ENCODE measurements at regions of chr2 and their contacts with region 1.

Region 1: GRCh38 chr2:62195421-62196277 is at the start of gene B3GNT2:
- DNase-seq: peak; percentile 79 to 92 (median 84)
- ATAC-seq: peak; percentile 75
- H3K4me3 ChIP-seq: peak within 1 kb of the TSS; percentile 93 to 99
- H3K4me3 Mint-ChIP-seq: peak within 1 kb of the TSS; percentile 91
- H3K27ac ChIP-seq: peak within 1 kb of the TSS; percentile 86 to 90
- H3K27ac Mint-ChIP-seq: peak within 1 kb of the TSS; percentile 91
- H3K4me1 ChIP-seq: peaks cover 40% of the 10 kb centered on the region
- H3K4me1 Mint-ChIP-seq: peaks cover 32% of the 10 kb centered on the region
- H3K27me3 ChIP-seq: no peaks in the 10 kb centered on the region
- H3K27me3 Mint-ChIP-seq: no peaks in the 10 kb centered on the region
- CTCF ChIP-seq: no peak
- total RNA-seq, gene B3GNT2: 74.1 to 77.9 TPM

Region 2: DNA sequence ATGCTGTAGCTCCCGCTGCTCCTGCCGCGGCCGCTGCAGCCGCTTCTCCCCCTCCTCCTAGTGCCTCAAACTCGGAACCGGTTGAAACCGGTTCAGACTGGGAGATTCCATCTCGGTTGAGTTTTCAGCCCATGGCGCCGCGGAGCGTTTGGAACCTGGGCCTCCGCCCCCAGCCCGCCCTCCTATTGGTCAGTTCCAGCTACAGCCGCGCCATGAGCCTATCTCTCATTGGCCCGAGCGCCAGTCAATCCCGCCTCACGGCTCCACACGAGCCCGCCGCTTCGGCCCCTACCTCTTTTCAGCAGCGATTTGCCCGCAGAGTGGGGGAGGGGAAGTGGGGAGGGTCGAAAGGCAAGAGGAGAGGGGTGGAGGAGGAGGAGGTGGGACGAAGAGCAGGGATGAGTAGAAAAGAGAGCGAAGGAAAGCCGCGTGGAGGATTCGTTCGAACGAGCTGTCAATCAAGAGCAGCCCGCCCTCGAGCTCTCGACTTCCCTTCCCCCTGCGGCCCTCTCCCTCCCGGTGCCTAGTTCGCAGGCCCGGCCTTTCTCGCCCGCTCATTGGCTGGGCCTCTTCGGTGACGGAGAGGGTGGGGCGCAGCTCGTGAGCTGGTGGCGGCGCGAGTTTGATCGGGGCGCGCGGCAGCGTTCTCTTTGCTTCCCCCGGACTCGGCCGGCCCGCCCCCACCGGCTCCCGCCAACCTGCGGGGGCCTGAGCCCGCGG is 657.3 kb before region 1 on chr2 and contains the start of gene XPO1:
- CTCF ChIA-PET with region 1: no interaction called
- POLR2A ChIA-PET with region 1: no interaction called
- intact Hi-C with region 1: loop called (anchors 5 kb)
- DNase-seq: peak; percentile 94 to 100 (median 99)
- ATAC-seq: peak; percentile 74
- H3K4me3 ChIP-seq: peak within 1 kb of the TSS; percentile 83 to 92
- H3K4me3 Mint-ChIP-seq: peak within 1 kb of the TSS; percentile 92
- H3K27ac ChIP-seq: peak within 1 kb of the TSS; percentile 100
- H3K27ac Mint-ChIP-seq: peak within 1 kb of the TSS; percentile 99
- H3K4me1 ChIP-seq: peaks cover 23% of the 10 kb centered on the region
- H3K4me1 Mint-ChIP-seq: peaks cover 38% of the 10 kb centered on the region
- H3K27me3 ChIP-seq: no peaks in the 10 kb centered on the region
- H3K27me3 Mint-ChIP-seq: no peaks in the 10 kb centered on the region
- CTCF ChIP-seq: no peak
- total RNA-seq, gene XPO1: 96.6 TPM

Region 3: DNA sequence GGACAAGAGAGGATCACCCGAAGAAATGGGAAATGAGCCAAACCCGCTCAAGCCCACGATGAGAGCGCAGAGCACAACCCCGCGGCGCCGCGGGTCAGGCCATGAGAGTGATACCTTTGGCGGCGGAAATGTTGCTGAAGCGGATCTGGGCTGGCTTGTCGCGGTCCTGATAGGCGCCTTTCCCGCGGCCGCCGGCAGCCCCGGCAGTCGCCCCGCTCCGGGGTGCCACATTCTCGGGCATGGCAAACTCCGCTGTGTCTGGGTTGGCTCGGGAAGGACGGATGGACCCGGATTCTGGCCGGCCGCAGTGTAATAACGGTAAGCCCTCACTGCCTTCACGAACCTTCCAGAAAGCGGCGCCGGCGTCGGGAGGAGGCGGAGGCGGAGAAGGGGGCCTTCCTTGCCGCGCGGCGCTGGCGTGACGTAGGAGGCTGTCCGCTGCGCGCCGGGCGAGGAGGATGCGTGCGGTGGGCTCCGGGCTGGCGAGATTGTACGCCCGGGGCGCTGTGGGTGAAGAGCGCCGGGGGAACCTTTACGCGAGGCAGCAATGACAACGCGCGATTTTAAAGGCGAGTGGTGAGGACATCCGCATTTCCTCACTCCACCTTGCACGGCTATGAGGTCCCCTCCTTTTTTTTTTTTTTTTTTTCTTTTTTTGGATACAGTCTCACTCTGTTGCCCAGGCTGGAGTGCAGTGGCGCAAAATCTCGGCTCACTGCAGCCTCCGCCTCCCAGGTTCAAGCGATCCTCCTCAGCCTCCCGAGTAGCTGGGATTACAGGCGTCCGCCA is 307.2 kb before region 1 on chr2 and contains the start of gene CCT4:
- CTCF ChIA-PET with region 1: no interaction called
- POLR2A ChIA-PET with region 1: no interaction called
- intact Hi-C with region 1: loop called in 1 of 2 experiments (anchors 2 kb)
- DNase-seq: peak; percentile 81 to 98 (median 92)
- ATAC-seq: peak; percentile 89
- H3K4me3 ChIP-seq: peak within 1 kb of the TSS; percentile 85 to 100
- H3K4me3 Mint-ChIP-seq: peak within 1 kb of the TSS; percentile 95
- H3K27ac ChIP-seq: peak within 1 kb of the TSS; percentile 99
- H3K27ac Mint-ChIP-seq: peak within 1 kb of the TSS; percentile 98
- H3K4me1 ChIP-seq: peaks cover 28% of the 10 kb centered on the region
- H3K4me1 Mint-ChIP-seq: peaks cover 33% of the 10 kb centered on the region
- H3K27me3 ChIP-seq: no peaks in the 10 kb centered on the region
- H3K27me3 Mint-ChIP-seq: no peaks in the 10 kb centered on the region
- CTCF ChIP-seq: no peak
- total RNA-seq, gene CCT4: 102 to 106 TPM

Region 4: DNA sequence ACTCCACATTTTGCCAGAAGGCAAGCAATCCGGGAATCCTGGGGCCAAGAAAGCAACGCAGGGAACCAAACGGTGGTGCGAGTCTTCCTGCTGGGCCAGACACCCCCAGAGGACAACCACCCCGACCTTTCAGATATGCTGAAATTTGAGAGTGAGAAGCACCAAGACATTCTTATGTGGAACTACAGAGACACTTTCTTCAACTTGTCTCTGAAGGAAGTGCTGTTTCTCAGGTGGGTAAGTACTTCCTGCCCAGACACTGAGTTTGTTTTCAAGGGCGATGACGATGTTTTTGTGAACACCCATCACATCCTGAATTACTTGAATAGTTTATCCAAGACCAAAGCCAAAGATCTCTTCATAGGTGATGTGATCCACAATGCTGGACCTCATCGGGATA is 27.0 kb after region 1 on chr2:
- CTCF ChIA-PET with region 1: interaction called, 6 read pairs
- POLR2A ChIA-PET with region 1: interaction called, 3 read pairs
- intact Hi-C with region 1: loop called in 1 of 2 experiments (anchors 2 kb)
- DNase-seq: peak in 3 of 9 experiments; percentile 52 to 80 (median 61)
- ATAC-seq: peak; percentile 76
- H3K4me3 ChIP-seq: no peak overlapping the region
- H3K4me3 Mint-ChIP-seq: peak overlapping the region; percentile 49
- H3K27ac ChIP-seq: peak overlapping the region; percentile 23 to 81
- H3K27ac Mint-ChIP-seq: peak overlapping the region; percentile 72
- H3K4me1 ChIP-seq: peaks cover 69% of the 10 kb centered on the region
- H3K4me1 Mint-ChIP-seq: peaks cover 82% of the 10 kb centered on the region
- H3K27me3 ChIP-seq: no peaks in the 10 kb centered on the region
- H3K27me3 Mint-ChIP-seq: no peaks in the 10 kb centered on the region
- CTCF ChIP-seq: no peak

Region 5: DNA sequence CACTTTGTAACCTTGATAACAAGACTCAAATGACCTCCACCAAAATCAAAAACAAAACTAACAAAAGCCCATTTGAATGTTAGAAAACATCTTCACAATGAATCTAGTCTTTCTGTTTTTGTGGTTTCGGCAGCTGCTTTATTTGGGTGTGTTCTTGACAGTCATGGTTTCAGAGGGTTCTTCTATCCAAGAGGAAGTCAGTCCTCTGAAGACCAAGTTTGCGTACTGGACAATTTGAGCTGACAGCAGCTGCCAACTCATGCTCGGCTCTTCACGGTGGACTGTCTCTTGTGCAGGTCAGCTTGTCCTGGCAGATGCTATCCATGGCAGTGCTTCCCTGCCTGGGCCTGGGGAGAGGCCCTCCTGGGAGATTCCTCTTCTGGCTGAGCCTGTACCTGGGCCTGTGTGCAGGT is 219.4 kb after region 1 on chr2:
- CTCF ChIA-PET with region 1: interaction called, 5 read pairs
- POLR2A ChIA-PET with region 1: no interaction called
- intact Hi-C with region 1: loop called (anchors 2 to 10 kb)
- DNase-seq: no peak
- ATAC-seq: no peak
- H3K4me3 ChIP-seq: no peak overlapping the region
- H3K4me3 Mint-ChIP-seq: no peak overlapping the region
- H3K27ac ChIP-seq: no peak overlapping the region
- H3K27ac Mint-ChIP-seq: no peak overlapping the region
- H3K4me1 ChIP-seq: peaks cover 6% of the 10 kb centered on the region
- H3K4me1 Mint-ChIP-seq: peaks cover 9% of the 10 kb centered on the region
- H3K27me3 ChIP-seq: no peaks in the 10 kb centered on the region
- H3K27me3 Mint-ChIP-seq: peaks cover 2% of the 10 kb centered on the region
- CTCF ChIP-seq: no peak

Region 6: GRCh38 chr2:62526531-62527381 is 331.1 kb after region 1 on chr2:
- CTCF ChIA-PET with region 1: no interaction called
- POLR2A ChIA-PET with region 1: no interaction called
- intact Hi-C with region 1: no loop called
- DNase-seq: no peak
- ATAC-seq: no peak
- H3K4me3 ChIP-seq: no peak overlapping the region
- H3K4me3 Mint-ChIP-seq: no peak overlapping the region
- H3K27ac ChIP-seq: no peak overlapping the region
- H3K27ac Mint-ChIP-seq: no peak overlapping the region
- H3K4me1 ChIP-seq: no peaks in the 10 kb centered on the region
- H3K4me1 Mint-ChIP-seq: no peaks in the 10 kb centered on the region
- H3K27me3 ChIP-seq: no peaks in the 10 kb centered on the region
- H3K27me3 Mint-ChIP-seq: peaks cover 3% of the 10 kb centered on the region
- CTCF ChIP-seq: no peak

Region 7: DNA sequence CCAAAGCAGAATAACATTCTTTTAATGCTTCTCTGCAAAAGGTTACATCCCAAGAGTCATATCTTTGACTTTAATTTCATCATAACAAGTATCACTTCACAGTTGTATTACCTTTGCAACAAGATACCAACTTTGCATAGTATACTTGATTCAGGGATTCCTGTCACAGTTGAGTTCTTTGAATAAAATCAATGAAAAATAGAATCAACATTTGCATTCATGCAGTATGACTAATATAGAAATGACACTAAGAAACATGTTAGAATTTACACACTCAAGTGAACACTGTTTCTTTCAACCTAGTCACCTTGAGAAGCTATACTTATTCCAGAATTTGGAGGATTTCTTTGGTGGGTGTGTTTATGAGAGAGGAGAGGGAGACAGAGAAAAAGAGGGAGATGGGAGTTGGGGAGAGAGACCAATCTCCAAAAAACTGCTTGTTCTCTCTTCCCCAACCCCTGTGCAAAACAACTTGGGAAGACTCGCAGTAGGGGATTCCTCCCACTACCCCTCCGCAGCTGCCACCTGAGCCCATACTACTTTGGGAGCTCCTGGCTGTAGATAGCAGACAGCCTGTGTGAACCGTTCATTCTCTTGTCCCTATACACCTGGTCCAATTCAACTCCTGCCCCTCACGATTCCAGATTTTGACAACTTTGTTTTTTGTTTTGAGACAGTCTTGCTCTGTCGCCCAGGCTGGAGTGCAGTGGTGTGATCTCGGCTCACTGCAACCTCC is 1890.9 kb after region 1 on chr2:
- CTCF ChIA-PET with region 1: no interaction called
- POLR2A ChIA-PET with region 1: no interaction called
- intact Hi-C with region 1: no loop called
- DNase-seq: no peak
- ATAC-seq: no peak
- H3K4me3 ChIP-seq: no peak overlapping the region
- H3K4me3 Mint-ChIP-seq: no peak overlapping the region
- H3K27ac ChIP-seq: no peak overlapping the region
- H3K27ac Mint-ChIP-seq: no peak overlapping the region
- H3K4me1 ChIP-seq: no peaks in the 10 kb centered on the region
- H3K4me1 Mint-ChIP-seq: peaks cover 6% of the 10 kb centered on the region
- H3K27me3 ChIP-seq: no peaks in the 10 kb centered on the region
- H3K27me3 Mint-ChIP-seq: no peaks in the 10 kb centered on the region
- CTCF ChIP-seq: no peak

Measured in CD8-positive, alpha-beta T cell (primary cell).